MCF 10A (cell line): ENCODE measurements at regions of chr10 and their contacts with region 1.

Region 1: DNA sequence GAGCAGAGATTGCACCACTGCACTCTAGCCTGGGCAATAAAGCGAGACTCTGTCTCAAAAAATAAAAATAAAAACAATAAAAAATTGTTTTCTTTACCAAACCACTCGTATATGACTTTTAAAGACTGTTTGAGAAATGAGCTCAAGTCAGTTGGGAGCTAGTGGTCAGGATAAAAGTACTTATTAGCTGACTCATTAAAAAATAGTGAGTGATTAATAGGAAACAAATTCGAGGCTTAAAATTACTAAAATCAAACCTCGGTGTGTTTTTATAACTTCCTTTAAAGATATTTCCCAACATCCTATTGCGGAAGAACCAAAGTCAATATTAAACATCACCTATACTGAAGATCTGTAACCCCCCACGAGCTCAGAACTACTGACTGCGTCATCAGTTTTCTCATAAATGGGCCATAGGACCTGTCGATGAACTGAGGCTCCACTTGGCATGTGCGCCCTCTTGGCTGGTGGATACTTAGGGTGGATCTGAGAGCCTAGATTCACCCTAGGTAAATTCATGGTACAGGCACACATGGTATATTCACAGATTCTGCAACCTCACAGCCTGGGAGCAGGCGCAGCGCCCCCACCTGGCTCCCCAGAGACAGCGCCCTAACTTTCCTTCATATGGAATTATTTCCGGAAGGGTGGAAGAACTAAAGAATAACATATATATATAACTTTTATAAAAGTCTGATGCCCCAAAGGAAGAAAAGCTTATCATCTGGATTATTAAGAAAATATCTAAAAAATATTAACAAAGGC is 9.2 kb downstream of the MKI67 start:
- DNase-seq: no peak
- H3K4me3 Mint-ChIP-seq: no peak overlapping the region
- H3K27ac Mint-ChIP-seq: no peak overlapping the region
- H3K4me1 Mint-ChIP-seq: peaks cover 13% of the 10 kb centered on the region
- H3K27me3 Mint-ChIP-seq: no peaks in the 10 kb centered on the region
- CTCF ChIP-seq: no peak

Region 2: DNA sequence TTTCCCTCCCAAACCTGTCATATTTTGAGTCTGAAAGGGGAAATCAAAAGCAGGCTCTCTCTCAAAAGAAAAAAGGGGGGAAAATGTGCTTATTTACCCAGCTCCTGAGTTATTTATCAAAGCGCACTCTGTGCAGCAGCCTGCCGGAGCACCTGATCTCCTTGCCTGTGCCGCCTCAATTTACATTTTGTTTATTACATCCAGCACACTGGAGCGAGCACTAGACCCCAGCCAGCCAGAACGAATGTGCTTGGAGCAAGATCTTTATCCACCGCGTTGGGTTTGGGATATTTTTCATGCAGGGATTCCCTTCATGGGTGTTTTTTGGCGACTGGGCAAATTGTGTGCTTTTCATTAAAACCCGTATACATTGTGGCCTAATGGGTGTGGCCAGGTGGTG is 758.7 kb before region 1 on chr10:
- CTCF ChIA-PET with region 1: no interaction called
- POLR2A ChIA-PET with region 1: no interaction called
- intact Hi-C with region 1: no loop called
- DNase-seq: no peak
- H3K4me3 Mint-ChIP-seq: no peak overlapping the region
- H3K27ac Mint-ChIP-seq: no peak overlapping the region
- H3K4me1 Mint-ChIP-seq: no peaks in the 10 kb centered on the region
- H3K27me3 Mint-ChIP-seq: no peaks in the 10 kb centered on the region
- CTCF ChIP-seq: no peak

Region 3: GRCh38 chr10:128078136-128078969 is 38.7 kb before region 1 on chr10:
- CTCF ChIA-PET with region 1: interaction called, 10 read pairs
- POLR2A ChIA-PET with region 1: interaction called, 3 read pairs
- intact Hi-C with region 1: no loop called
- DNase-seq: peak; percentile 50
- H3K4me3 Mint-ChIP-seq: no peak overlapping the region
- H3K27ac Mint-ChIP-seq: no peak overlapping the region
- H3K4me1 Mint-ChIP-seq: no peaks in the 10 kb centered on the region
- H3K27me3 Mint-ChIP-seq: no peaks in the 10 kb centered on the region
- CTCF ChIP-seq: peak; percentile 65

Region 4: DNA sequence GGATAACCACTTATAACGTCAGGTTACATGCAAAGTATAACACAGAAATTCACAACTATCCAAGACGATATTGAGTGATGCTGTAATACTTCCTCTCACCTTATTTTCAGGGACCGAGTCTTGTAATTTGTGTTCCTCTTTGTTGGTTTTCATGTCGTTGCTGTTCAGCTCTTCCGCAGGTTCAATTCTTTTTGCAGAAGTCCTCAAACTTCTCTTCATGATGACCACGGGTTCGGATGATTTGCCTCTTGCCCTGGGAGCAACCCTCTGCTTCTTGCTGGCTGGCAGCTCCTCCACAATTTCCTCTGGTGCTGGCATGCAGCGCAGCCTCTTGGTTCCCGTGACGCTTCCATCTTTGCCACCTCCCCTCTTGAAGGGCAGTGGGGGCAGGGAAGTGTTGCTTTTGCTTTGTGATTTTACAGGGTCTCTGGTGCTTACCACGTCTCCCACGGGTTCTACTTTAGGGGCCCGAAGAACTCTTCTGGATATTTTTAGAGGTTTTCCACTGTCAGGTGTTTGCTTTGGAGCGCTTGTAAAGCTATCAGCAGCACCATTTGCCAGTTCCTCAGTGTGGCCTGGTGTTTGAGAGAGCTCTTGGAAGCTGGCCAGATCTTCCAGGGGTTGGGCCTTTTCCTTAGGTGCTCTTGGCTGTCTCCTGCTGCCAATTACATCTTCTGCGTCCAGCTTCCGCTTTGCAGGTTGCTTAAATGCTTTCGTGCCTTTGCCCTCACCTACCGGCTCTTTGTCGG is 14.4 kb before region 1 on chr10:
- CTCF ChIA-PET with region 1: interaction called, 26 read pairs
- POLR2A ChIA-PET with region 1: interaction called, 3 read pairs
- intact Hi-C with region 1: no loop called
- DNase-seq: no peak
- H3K4me3 Mint-ChIP-seq: no peak overlapping the region
- H3K27ac Mint-ChIP-seq: no peak overlapping the region
- H3K4me1 Mint-ChIP-seq: peaks cover 10% of the 10 kb centered on the region
- H3K27me3 Mint-ChIP-seq: no peaks in the 10 kb centered on the region
- CTCF ChIP-seq: no peak